ENCODE measurements at regions of chr7 and their contacts with region 1.

Region 1: GRCh38 chr7:69825113-69825616 is 226.9 kb downstream of the AUTS2 start:
- DNase-seq: peak; percentile 54
- ATAC-seq: peak; percentile 18
- H3K4me3 ChIP-seq: peak overlapping the region; percentile 24 to 83 (median 65)
- H3K4me3 Mint-ChIP-seq: peak overlapping the region; percentile 94
- H3K27ac ChIP-seq: peak overlapping the region; percentile 78 to 81
- H3K27ac Mint-ChIP-seq: peak overlapping the region; percentile 98
- H3K4me1 ChIP-seq: peaks cover 52 to 58% of the 10 kb centered on the region in 2 donors
- H3K4me1 Mint-ChIP-seq: peaks cover 69% of the 10 kb centered on the region
- H3K27me3 ChIP-seq: no peaks in the 10 kb centered on the region
- H3K27me3 Mint-ChIP-seq: no peaks in the 10 kb centered on the region
- CTCF ChIP-seq: no peak

Region 2: DNA sequence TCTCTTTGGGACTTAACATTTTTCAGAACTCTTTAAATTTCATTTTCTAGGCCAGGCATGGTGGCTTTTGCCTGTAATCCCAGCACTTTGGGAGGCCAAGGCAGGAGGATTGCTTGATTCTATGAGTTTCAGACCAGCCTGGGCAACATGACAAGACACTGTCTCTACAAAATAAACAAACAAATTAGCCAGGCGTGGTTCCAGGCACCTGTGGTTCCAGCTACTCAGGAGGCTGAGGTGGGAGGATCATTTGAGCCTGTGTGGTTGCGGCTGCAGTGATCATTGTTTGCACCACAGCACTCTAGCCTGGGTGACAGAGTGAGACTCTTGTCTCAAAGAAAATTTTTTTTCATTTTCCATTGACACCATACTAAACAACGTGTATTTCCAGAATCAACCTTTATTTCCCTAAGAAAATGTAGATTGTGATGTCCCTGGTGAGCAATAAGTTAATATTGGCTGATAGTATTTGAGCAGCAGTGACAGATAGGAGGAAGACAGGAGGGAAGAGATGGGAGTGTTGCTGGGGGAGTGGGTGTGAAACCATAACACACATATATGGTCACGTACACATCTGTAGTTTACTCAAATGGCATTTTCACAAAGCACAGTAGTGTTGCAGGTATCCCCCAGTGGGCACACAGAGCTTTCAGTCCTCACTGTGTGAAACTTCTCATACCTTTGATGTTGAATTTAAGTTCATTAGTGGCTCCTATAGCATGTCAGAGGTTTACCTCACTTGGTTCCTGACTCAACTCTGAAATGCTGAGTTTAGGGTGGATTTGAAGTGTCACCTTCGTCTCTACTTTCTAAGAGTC is 21.3 kb before region 1 on chr7:
- CTCF ChIA-PET with region 1: no interaction called
- POLR2A ChIA-PET with region 1: no interaction called
- intact Hi-C with region 1: no loop called
- DNase-seq: no peak
- ATAC-seq: no peak
- H3K4me3 ChIP-seq: no peak overlapping the region
- H3K4me3 Mint-ChIP-seq: no peak overlapping the region
- H3K27ac ChIP-seq: no peak overlapping the region
- H3K27ac Mint-ChIP-seq: no peak overlapping the region
- H3K4me1 ChIP-seq: peaks cover 6 to 10% of the 10 kb centered on the region in 2 donors
- H3K4me1 Mint-ChIP-seq: peaks cover 17% of the 10 kb centered on the region
- H3K27me3 ChIP-seq: no peaks in the 10 kb centered on the region
- H3K27me3 Mint-ChIP-seq: no peaks in the 10 kb centered on the region
- CTCF ChIP-seq: no peak

Region 3: GRCh38 chr7:69837387-69838068 is 12.4 kb after region 1 on chr7:
- CTCF ChIA-PET with region 1: interaction called, 27 read pairs
- POLR2A ChIA-PET with region 1: interaction called, 5 read pairs
- intact Hi-C with region 1: no loop called
- DNase-seq: no peak
- ATAC-seq: no peak
- H3K4me3 ChIP-seq: no peak overlapping the region
- H3K4me3 Mint-ChIP-seq: no peak overlapping the region
- H3K27ac ChIP-seq: no peak overlapping the region
- H3K27ac Mint-ChIP-seq: no peak overlapping the region
- H3K4me1 ChIP-seq: peaks cover 26 to 30% of the 10 kb centered on the region in 2 donors
- H3K4me1 Mint-ChIP-seq: peaks cover 38% of the 10 kb centered on the region
- H3K27me3 ChIP-seq: no peaks in the 10 kb centered on the region
- H3K27me3 Mint-ChIP-seq: no peaks in the 10 kb centered on the region
- CTCF ChIP-seq: no peak

Region 4: GRCh38 chr7:69843653-69844052 is 18.5 kb after region 1 on chr7:
- CTCF ChIA-PET with region 1: interaction called, 27 read pairs
- POLR2A ChIA-PET with region 1: interaction called, 5 read pairs
- intact Hi-C with region 1: loop called (anchors 1 kb)
- DNase-seq: peak; percentile 36
- ATAC-seq: peak; percentile 54
- H3K4me3 ChIP-seq: no peak overlapping the region
- H3K4me3 Mint-ChIP-seq: peak overlapping the region; percentile 78
- H3K27ac ChIP-seq: peak overlapping the region in 1 of 2 donors; percentile 49
- H3K27ac Mint-ChIP-seq: peak overlapping the region; percentile 71
- H3K4me1 ChIP-seq: peaks cover 64 to 65% of the 10 kb centered on the region in 2 donors
- H3K4me1 Mint-ChIP-seq: peaks cover 78% of the 10 kb centered on the region
- H3K27me3 ChIP-seq: no peaks in the 10 kb centered on the region
- H3K27me3 Mint-ChIP-seq: no peaks in the 10 kb centered on the region
- CTCF ChIP-seq: no peak

Region 5: GRCh38 chr7:69871213-69871885 is 46.2 kb after region 1 on chr7:
- CTCF ChIA-PET with region 1: no interaction called
- POLR2A ChIA-PET with region 1: no interaction called
- intact Hi-C with region 1: no loop called
- DNase-seq: no peak
- ATAC-seq: no peak
- H3K4me3 ChIP-seq: no peak overlapping the region
- H3K4me3 Mint-ChIP-seq: no peak overlapping the region
- H3K27ac ChIP-seq: no peak overlapping the region
- H3K27ac Mint-ChIP-seq: no peak overlapping the region
- H3K4me1 ChIP-seq: peaks cover 2 to 8% of the 10 kb centered on the region in 2 donors
- H3K4me1 Mint-ChIP-seq: peaks cover 26% of the 10 kb centered on the region
- H3K27me3 ChIP-seq: no peaks in the 10 kb centered on the region
- H3K27me3 Mint-ChIP-seq: no peaks in the 10 kb centered on the region
- CTCF ChIP-seq: no peak

Region 6: DNA sequence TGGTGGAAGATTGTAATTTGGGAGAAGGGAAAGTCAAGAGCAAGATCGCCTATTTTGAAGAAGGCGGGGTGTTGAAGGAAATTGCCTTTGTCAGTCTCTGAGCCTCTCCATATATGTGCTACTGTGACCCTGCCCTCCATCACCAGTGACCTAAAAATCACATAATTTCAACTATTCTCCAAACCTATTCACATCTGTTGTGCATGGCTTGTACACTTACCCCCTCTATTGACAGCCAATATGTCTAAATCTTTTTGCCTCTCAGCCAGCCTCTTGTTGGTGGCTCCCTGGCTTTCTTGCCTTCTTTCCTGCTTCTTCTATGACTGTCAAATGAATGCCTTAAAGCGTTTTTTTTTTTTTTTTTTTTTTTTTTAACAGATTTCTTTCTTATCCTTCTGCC is 68.7 kb after region 1 on chr7:
- CTCF ChIA-PET with region 1: interaction called, 3 read pairs
- POLR2A ChIA-PET with region 1: no interaction called
- intact Hi-C with region 1: loop called (anchors 5 kb)
- DNase-seq: peak; percentile 26
- ATAC-seq: peak; percentile 24
- H3K4me3 ChIP-seq: no peak overlapping the region
- H3K4me3 Mint-ChIP-seq: no peak overlapping the region
- H3K27ac ChIP-seq: no peak overlapping the region
- H3K27ac Mint-ChIP-seq: no peak overlapping the region
- H3K4me1 ChIP-seq: peaks cover 8 to 14% of the 10 kb centered on the region in 2 donors
- H3K4me1 Mint-ChIP-seq: peaks cover 36% of the 10 kb centered on the region
- H3K27me3 ChIP-seq: no peaks in the 10 kb centered on the region
- H3K27me3 Mint-ChIP-seq: no peaks in the 10 kb centered on the region
- CTCF ChIP-seq: peak; percentile 49

Region 7: GRCh38 chr7:69953136-69954067 is 128.2 kb after region 1 on chr7:
- CTCF ChIA-PET with region 1: interaction called, 3 read pairs
- POLR2A ChIA-PET with region 1: no interaction called
- intact Hi-C with region 1: loop called (anchors 5 kb)
- DNase-seq: peak; percentile 74
- ATAC-seq: peak; percentile 90
- H3K4me3 ChIP-seq: peak overlapping the region in 4 of 5 experiments; percentile 10 to 42 (median 18)
- H3K4me3 Mint-ChIP-seq: peak overlapping the region; percentile 75
- H3K27ac ChIP-seq: peak overlapping the region; percentile 64 to 79
- H3K27ac Mint-ChIP-seq: peak overlapping the region; percentile 97
- H3K4me1 ChIP-seq: peaks cover 42 to 43% of the 10 kb centered on the region in 2 donors
- H3K4me1 Mint-ChIP-seq: peaks cover 52% of the 10 kb centered on the region
- H3K27me3 ChIP-seq: no peaks in the 10 kb centered on the region
- H3K27me3 Mint-ChIP-seq: no peaks in the 10 kb centered on the region
- CTCF ChIP-seq: no peak